ENCODE measurements at regions of chr9 and their contacts with region 1.

Region 1: GRCh38 chr9:107489687-107490605 is at the start of gene KLF4:
- DNase-seq: peak; percentile 97
- total RNA-seq, gene KLF4: 82.4 to 151 TPM

Region 2: DNA sequence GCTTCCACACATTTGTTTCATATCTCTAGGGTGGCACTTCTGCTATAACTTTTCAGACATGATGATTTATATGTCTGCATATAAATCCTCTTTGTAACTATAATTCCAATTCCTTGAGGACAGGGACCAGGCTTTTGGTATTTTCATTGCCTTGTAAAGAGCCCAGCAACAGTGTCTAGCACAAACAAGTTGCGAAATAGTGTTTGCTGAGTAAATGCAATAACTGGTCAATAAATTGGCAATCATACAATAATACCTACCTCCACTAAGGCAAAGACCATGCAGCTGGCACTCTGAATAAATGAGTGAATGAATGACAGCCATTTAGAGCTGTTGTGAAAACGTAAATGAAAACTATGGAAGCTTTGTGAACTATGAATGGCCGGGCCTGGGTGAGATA is 1190.9 kb before region 1 on chr9:
- intact Hi-C with region 1: no loop called
- DNase-seq: no peak

Region 3: DNA sequence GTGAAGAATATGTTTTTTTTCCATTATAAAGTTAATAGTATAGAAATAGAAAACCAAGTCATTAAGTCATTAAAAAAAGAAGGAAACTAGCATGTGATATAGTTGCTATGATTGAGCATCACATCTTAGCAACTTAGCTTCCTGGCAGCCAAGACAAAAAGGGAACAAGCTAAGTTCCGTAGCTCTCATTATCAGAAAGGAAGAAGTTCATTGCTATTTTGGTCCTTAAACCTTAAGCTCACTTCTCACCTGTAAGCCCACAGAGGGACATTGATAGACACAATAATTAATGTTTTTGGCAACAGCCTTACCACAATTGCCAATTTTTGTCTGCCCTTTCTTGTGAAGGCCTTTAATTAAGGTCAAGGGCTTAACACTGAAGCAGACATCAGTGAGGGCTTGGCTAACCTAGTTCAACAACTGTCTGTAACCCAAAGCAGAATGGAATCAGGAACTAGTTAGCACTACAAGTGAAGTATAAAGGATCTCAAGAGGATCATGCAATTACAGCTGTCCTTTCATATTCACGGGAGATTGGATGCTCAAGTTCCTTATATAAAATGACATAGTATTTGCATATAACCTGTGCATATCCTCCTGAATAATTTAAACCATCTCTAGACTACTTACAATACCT is 23.6 kb after region 1 on chr9:
- intact Hi-C with region 1: no loop called
- DNase-seq: no peak

Region 4: GRCh38 chr9:107637421-107638420 is 147.8 kb after region 1 on chr9:
- intact Hi-C with region 1: loop called in 1 of 2 experiments (anchors 2 kb)
- DNase-seq: peak; percentile 96

Region 5: GRCh38 chr9:107737987-107738743 is 248.2 kb after region 1 on chr9:
- intact Hi-C with region 1: loop called in 1 of 2 experiments (anchors 5 kb)
- DNase-seq: peak; percentile 96

Region 6: GRCh38 chr9:108150736-108151586 is 661.0 kb after region 1 on chr9:
- intact Hi-C with region 1: loop called in 1 of 2 experiments (anchors 10 kb)
- DNase-seq: no peak

Region 7: DNA sequence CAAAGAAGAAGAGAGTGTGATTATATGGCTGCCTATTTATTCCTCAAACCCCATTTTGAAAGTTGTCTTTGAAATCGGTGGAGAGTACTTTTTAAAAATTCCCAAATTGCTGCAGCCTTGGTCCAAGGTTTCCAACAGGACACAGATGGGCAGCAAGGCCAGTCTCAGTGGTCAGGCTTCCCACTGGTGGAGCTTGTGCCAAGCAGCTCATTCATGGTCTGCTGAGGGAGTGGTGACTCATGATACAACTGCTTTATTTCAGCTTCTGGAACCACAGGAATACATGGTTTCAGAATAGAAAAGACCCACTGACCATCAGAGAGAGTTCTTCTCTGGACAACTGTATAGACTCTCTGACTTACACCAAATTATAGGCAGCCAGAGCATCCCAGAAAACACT is 672.7 kb after region 1 on chr9:
- intact Hi-C with region 1: loop called (anchors 10 kb)
- DNase-seq: peak; percentile 76

Region 8: GRCh38 chr9:108272349-108272899 is 782.5 kb after region 1 on chr9:
- intact Hi-C with region 1: loop called in 1 of 2 experiments (anchors 10 kb)
- DNase-seq: peak; percentile 86